Activated CD4-positive, alpha-beta memory T cell treated with anti-CD3 and anti-CD28 coated beads for 36 hours (primary cell): ENCODE measurements at regions of chr6 and their contacts with region 1.

Region 1: GRCh38 chr6:166488076-166488685 is 98.3 kb downstream of the RAMACL start:
- DNase-seq: peak; percentile 86
- H3K4me3 Mint-ChIP-seq: peak overlapping the region; percentile 71
- H3K27ac Mint-ChIP-seq: peak overlapping the region; percentile 97
- H3K4me1 Mint-ChIP-seq: peaks cover 20% of the 10 kb centered on the region
- H3K27me3 Mint-ChIP-seq: no peaks in the 10 kb centered on the region

Region 2: GRCh38 chr6:166342349-166343149 is 145.6 kb before region 1 on chr6 and contains the start of gene SFT2D1:
- CTCF ChIA-PET with region 1: no interaction called
- POLR2A ChIA-PET with region 1: no interaction called
- intact Hi-C with region 1: loop called (anchors 5 kb)
- DNase-seq: peak; percentile 85
- H3K4me3 Mint-ChIP-seq: peak within 1 kb of the TSS; percentile 83
- H3K27ac Mint-ChIP-seq: peak within 1 kb of the TSS; percentile 86
- H3K4me1 Mint-ChIP-seq: peaks cover 11% of the 10 kb centered on the region
- H3K27me3 Mint-ChIP-seq: no peaks in the 10 kb centered on the region
- total RNA-seq, gene SFT2D1: 57.2 to 59.5 TPM

Region 3: DNA sequence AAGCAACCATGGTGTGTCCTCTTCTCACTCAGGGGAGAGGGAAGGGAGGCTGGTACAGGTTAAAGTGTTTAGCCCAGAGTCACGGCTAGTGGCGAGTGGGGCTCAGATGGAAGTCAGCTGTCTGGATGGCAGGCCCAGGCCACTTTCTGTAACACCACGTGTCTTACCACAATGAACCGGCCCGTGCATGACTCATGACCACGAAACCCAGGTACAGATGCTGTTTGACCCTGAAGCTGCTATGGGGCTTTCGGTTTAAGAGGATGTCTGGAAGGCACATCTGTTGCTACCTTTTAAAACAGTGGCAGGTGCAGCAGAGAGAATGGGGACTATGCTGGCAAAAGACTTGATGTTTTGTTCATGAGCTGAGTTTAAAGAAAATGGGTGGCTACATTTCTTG is 68.9 kb before region 1 on chr6:
- CTCF ChIA-PET with region 1: no interaction called
- POLR2A ChIA-PET with region 1: no interaction called
- intact Hi-C with region 1: loop called (anchors 1 kb)
- DNase-seq: peak; percentile 82
- H3K4me3 Mint-ChIP-seq: peak overlapping the region; percentile 4
- H3K27ac Mint-ChIP-seq: peak overlapping the region; percentile 73
- H3K4me1 Mint-ChIP-seq: peaks cover 62% of the 10 kb centered on the region
- H3K27me3 Mint-ChIP-seq: no peaks in the 10 kb centered on the region

Region 4: DNA sequence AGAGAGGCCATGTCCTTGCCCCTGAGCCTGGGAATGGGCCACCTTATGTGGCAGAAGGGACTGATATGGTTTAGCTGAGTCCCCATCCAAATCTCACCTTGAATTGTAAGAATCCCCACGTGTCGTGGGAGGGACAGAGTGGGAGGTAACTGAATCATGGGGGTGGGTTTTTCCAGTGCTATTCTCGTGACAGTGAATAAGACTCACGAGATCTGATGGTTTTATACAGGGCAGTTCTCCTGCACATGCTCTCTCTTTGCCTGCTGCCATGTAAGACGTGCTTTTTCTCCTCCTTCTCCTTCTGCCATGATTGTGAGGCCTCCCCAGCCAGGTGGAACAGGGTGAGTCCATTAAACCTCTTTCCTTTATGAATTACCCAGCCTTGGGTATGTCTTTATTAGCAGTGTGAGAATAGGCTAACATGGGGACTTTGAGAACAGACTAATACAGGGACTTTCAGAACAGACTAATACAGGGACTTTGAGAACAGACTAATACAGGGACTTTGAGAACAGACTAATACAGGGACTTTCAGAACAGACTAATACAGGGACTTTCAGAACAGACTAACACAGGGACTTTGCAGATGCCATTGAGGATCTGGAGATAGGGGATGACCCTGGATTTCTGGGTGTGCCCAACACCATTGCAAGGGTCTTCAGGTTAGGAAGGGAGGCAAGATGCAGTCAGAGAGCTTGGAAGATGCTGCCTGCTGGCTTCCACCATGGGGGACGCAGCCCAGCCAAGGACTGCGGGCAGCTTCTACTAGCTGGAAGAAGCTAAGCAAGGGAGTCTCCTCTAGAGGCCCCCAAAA is 11.4 kb after region 1 on chr6:
- CTCF ChIA-PET with region 1: no interaction called
- POLR2A ChIA-PET with region 1: no interaction called
- intact Hi-C with region 1: loop called (anchors 1 kb)
- DNase-seq: peak; percentile 30
- H3K4me3 Mint-ChIP-seq: no peak overlapping the region
- H3K27ac Mint-ChIP-seq: peak overlapping the region; percentile 71
- H3K4me1 Mint-ChIP-seq: peaks cover 28% of the 10 kb centered on the region
- H3K27me3 Mint-ChIP-seq: no peaks in the 10 kb centered on the region

Region 5: GRCh38 chr6:166515072-166515810 is 27.1 kb after region 1 on chr6:
- CTCF ChIA-PET with region 1: no interaction called
- POLR2A ChIA-PET with region 1: no interaction called
- intact Hi-C with region 1: no loop called
- DNase-seq: peak; percentile 78
- H3K4me3 Mint-ChIP-seq: no peak overlapping the region
- H3K27ac Mint-ChIP-seq: no peak overlapping the region
- H3K4me1 Mint-ChIP-seq: peaks cover 15% of the 10 kb centered on the region
- H3K27me3 Mint-ChIP-seq: no peaks in the 10 kb centered on the region

Region 6: GRCh38 chr6:166540631-166541331 is 52.6 kb after region 1 on chr6:
- CTCF ChIA-PET with region 1: no interaction called
- POLR2A ChIA-PET with region 1: interaction called, 3 read pairs
- intact Hi-C with region 1: loop called (anchors 1 kb)
- DNase-seq: peak; percentile 86
- H3K4me3 Mint-ChIP-seq: peak overlapping the region; percentile 65
- H3K27ac Mint-ChIP-seq: peak overlapping the region; percentile 85
- H3K4me1 Mint-ChIP-seq: peaks cover 29% of the 10 kb centered on the region
- H3K27me3 Mint-ChIP-seq: no peaks in the 10 kb centered on the region